ENCODE measurements at regions of chr22 and their contacts with region 1.

Region 1: GRCh38 chr22:17436382-17436980 is 67.2 kb downstream of the CECR2 start:
- DNase-seq: no peak

Region 2: DNA sequence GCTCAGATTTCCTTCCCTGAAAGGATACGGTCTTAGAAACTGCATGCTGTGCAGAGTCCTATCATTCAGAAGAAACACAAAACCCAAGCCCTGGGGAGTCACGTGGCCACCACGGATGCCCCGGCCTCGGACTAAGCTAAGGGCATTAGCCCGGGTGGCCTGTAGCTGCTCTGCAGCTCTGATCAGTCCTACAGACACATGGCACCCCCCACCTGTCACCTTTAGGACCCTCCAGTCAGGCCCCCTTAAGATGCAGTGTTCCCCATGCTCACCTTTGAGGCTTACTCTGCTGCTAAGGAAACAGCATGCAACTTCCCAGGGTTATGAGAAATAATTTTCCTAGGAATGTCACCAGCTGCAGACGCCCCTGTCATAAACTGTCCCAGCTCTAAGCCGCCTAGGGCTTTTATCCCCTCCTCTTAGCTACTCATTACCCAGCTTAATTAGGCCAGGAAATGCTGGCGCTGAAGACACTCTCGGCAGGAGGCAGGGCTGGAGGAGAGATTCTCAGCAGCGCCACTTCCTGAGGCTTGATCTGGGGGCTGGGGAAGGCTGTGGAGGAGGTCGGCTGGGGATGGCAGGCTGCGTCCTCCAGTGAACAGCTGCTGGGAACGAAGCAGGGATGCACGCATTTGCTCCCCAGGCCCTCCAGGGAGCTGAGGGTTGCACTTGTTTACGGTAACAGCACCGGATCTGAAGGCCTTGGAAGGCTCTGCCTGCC is 170.1 kb before region 1 on chr22:
- intact Hi-C with region 1: loop called in 1 of 2 experiments (anchors 10 kb)
- DNase-seq: no peak

Region 3: GRCh38 chr22:17411213-17411612 is 25.3 kb before region 1 on chr22:
- intact Hi-C with region 1: loop called in 1 of 2 experiments (anchors 2 kb)
- DNase-seq: no peak

Region 4: DNA sequence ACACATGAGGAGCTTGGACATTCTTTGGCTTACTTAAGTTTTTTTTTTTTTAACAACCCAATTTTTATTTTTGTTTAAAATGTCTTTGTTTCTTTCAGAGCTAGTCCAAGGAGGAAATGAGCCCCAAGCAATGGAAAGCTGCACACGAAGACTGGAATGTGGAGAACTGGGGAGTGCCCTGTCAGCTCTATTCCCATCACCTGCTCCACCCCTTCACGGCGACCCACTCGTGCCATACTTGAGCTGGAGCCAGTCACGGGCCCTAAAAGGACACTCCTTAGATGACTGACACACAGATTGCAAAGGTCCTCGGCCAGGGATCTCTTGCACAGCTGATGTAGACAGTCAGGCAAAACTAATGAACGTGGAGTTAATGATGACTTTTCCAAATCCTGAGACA is 116.3 kb after region 1 on chr22:
- intact Hi-C with region 1: no loop called
- DNase-seq: no peak

Measured in posterior vena cava (tissue), 2 donors.